ENCODE measurements at regions of chr14 and their contacts with region 1.

Region 1: DNA sequence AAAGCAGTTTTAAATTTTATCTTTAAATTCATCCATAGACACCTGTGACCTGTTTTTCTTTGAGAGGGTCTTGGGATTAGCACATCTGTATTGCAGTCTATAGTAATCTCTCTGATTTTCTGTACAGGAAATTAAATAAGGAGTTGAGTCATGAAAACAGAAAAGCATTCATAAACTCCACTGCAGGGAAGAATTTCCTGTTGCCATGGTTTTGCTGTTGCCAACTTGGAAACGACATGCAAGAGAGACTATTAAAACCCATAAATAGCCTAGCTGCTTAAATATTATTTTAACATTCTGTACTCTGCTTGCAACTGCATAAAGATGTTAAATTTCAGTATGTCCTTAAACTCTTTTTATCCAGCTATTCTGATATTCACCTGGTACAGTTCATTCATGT is 281.0 kb upstream of the RGS6 start:
- DNase-seq: peak in 1 of 2 donors; percentile 57
- ATAC-seq: peak in 6 of 8 donors; percentile 30 to 84 (median 76)
- H3K4me3 ChIP-seq: no peak overlapping the region
- H3K27ac ChIP-seq: peak overlapping the region in 5 of 10 donors; percentile 9 to 54 (median 37)
- H3K4me1 ChIP-seq: peaks cover 0 to 14% (median 10%) of the 10 kb centered on the region in 9 donors
- H3K27me3 ChIP-seq: no peaks in the 10 kb centered on the region
- CTCF ChIP-seq: no peak

Region 2: DNA sequence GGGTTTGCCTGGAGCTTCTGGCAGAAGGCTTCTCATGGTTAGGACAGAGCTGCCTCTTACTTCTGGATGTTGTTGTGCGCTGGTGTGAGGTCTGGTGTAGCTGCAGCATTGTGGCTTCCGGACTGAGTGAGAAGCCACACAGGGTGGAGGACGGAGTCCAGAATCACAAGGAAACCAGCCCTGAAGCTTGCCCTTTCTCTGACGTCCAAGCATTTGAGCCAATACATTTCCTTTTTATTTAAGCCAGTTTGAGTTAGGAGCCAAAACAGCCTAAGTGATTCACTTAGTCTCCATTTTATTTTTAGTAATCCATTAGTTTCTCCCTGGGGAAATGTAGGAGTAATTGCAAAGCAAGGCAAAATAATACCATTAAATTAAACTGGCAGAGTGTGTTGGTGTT is 121.4 kb before region 1 on chr14:
- intact Hi-C with region 1: loop called in 1 of 10 experiments (anchors 10 kb)
- DNase-seq: peak in 1 of 2 donors; percentile 62
- ATAC-seq: peak; percentile 72 to 97 (median 93)
- H3K4me3 ChIP-seq: peak overlapping the region in 1 of 10 donors; percentile 3
- H3K27ac ChIP-seq: peak overlapping the region in 7 of 10 donors; percentile 23 to 57 (median 42)
- H3K4me1 ChIP-seq: peaks cover 0 to 23% (median 13%) of the 10 kb centered on the region in 9 donors
- H3K27me3 ChIP-seq: no peaks in the 10 kb centered on the region
- CTCF ChIP-seq: no peak